ENCODE measurements at regions of chr3 and their contacts with region 1.

Region 1: DNA sequence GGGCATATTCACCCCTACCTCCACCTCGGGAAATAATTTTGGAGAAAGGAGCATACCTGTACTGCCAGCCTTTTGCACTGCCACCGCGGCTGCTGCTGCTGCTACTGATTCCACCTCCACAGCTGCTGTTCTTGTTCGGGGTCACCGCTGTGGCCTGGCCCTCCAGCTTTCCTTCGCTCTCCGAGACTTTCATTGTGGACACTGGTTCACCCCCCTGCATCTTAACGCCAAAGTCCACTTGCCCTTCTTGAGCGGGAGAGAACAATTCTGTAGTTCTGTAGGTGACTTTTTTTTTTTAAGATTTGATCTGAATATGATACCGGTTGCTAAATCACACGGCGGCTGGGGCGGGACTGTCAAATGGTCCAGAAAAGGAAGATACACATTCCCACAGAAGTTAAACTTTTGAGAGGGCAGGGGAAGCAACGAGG is 701 bp downstream of the OSBPL11 start:
- DNase-seq: no peak
- H3K4me3 Mint-ChIP-seq: peak overlapping the region; percentile 90
- H3K27ac Mint-ChIP-seq: peak overlapping the region; percentile 85
- H3K4me1 Mint-ChIP-seq: peaks cover 21% of the 10 kb centered on the region
- H3K27me3 Mint-ChIP-seq: no peaks in the 10 kb centered on the region

Region 2: GRCh38 chr3:124730129-124730940 is 864.3 kb before region 1 on chr3 and contains the start of gene UMPS:
- intact Hi-C with region 1: loop called (anchors 2 kb)
- DNase-seq: peak; percentile 98
- H3K4me3 Mint-ChIP-seq: peak within 1 kb of the TSS; percentile 100
- H3K27ac Mint-ChIP-seq: peak within 1 kb of the TSS; percentile 100
- H3K4me1 Mint-ChIP-seq: peaks cover 22% of the 10 kb centered on the region
- H3K27me3 Mint-ChIP-seq: peaks cover 17% of the 10 kb centered on the region
- total RNA-seq, gene UMPS: 54.5 and 65.6 TPM in 2 replicates

Region 3: GRCh38 chr3:124826703-124827102 is 767.9 kb before region 1 on chr3:
- intact Hi-C with region 1: no loop called
- DNase-seq: no peak
- H3K4me3 Mint-ChIP-seq: no peak overlapping the region
- H3K27ac Mint-ChIP-seq: no peak overlapping the region
- H3K4me1 Mint-ChIP-seq: no peaks in the 10 kb centered on the region
- H3K27me3 Mint-ChIP-seq: peaks cover 22% of the 10 kb centered on the region

Region 4: GRCh38 chr3:125519678-125520589 is 74.7 kb before region 1 on chr3 and contains the start of gene SNX4:
- intact Hi-C with region 1: loop called (anchors 1 kb)
- DNase-seq: peak; percentile 96
- H3K4me3 Mint-ChIP-seq: peak within 1 kb of the TSS; percentile 96
- H3K27ac Mint-ChIP-seq: peak within 1 kb of the TSS; percentile 87
- H3K4me1 Mint-ChIP-seq: peaks cover 24% of the 10 kb centered on the region
- H3K27me3 Mint-ChIP-seq: no peaks in the 10 kb centered on the region
- total RNA-seq, gene SNX4: 44.4 and 45.3 TPM in 2 replicates